ENCODE measurements at regions of chr6 and their contacts with region 1.

Region 1: GRCh38 chr6:93562582-93562981 is 143.2 kb upstream of the EPHA7 start:
- DNase-seq: no peak
- H3K4me3 ChIP-seq: no peak overlapping the region
- CTCF ChIP-seq: no peak
- POLR2A ChIP-seq: no peak

Region 2: DNA sequence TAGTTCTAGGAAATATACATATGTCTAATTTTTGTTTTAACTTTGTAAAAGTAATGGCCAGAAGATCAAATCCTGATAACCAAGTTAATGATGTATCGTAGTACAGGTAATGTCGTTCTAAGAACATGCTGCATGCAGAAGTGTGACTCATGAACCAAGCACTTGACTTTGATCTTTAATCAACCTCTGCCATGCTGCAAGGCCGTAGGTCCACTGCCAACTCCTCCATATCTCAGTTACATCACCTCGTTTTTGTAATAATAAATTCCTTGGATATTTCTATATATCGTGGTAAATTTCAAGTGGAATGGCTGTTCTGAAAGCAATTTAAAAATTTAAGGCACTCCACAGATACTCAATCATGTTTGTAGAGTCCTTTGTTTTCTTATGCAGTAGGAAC is 915.0 kb before region 1 on chr6:
- intact Hi-C with region 1: no loop called
- DNase-seq: no peak
- H3K4me3 ChIP-seq: no peak overlapping the region
- CTCF ChIP-seq: no peak
- POLR2A ChIP-seq: no peak

Region 3: GRCh38 chr6:92888316-92888715 is 674.3 kb before region 1 on chr6:
- intact Hi-C with region 1: loop called (anchors 2 kb)
- DNase-seq: no peak
- H3K4me3 ChIP-seq: no peak overlapping the region
- CTCF ChIP-seq: no peak
- POLR2A ChIP-seq: no peak

Region 4: GRCh38 chr6:93644611-93645010 is 82.0 kb after region 1 on chr6:
- intact Hi-C with region 1: no loop called
- DNase-seq: no peak
- H3K4me3 ChIP-seq: no peak overlapping the region
- CTCF ChIP-seq: no peak
- POLR2A ChIP-seq: no peak